IMR-90 (cell line): ENCODE measurements at regions of chr19 and their contacts with region 1.

Region 1: DNA sequence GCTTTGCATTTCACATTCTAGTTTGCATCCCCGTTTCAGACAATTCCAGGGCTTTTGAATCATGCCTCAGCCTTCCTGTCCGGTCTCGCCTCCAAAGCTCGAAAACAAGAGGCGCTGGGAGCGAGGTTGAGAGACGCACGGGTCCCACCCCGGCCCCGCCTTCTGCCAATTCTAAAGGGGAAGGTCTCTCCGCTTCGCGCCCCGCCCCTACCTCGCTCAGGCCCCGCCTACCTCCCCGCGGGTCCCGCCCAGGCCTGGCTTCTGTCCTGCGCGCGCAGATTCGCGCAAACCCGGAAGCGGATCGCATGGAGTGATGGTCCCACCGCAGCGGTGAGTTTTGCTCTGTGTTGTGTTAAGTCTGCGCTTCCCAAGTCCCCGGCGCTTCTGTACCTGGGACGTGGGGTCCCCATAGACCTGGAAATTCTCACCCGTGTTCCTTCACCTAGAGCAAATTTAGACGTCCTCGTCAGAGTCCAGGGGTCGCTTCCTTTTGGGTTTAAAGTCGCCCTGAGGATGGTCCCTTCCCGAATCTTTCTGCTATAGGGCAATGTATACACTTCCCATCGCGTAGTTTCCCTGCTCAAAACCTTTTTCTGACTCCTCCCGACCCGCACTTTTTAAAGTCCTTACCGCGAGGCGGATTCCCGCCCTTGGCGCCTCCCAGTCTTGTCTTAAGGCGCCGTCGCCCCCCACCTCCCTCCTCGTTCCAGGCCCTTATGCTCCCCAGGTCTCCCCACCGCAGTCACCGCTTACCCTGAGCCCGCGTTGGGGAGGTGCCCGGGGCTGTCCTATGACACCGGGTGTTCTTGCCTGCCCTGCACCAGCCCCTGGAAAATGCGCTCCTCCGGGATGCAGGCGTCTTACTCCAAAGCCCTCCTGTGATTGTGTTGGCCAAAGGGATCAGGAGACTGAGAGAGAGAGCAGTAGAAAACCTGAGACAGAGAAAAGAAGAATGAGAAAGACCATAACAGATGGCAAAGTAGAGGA is at the start of gene ZNF845:
- DNase-seq: peak; percentile 89
- ATAC-seq: peak; percentile 100
- H3K4me3 ChIP-seq: peak within 1 kb of the TSS; percentile 69
- H3K27ac ChIP-seq: peak within 1 kb of the TSS; percentile 62
- H3K4me1 ChIP-seq: peaks cover 1% of the 10 kb centered on the region; the same call in 1 of the 2 replicates
- H3K27me3 ChIP-seq: no peaks in the 10 kb centered on the region
- CTCF ChIP-seq: no peak
- POLR2A ChIP-seq: peak; percentile 53; the same call in 1 of the 2 replicates
- RAD21 ChIP-seq: no peak
- total RNA-seq, gene ZNF845: 9.5 and 13.1 TPM in 2 replicates

Region 2: GRCh38 chr19:53254411-53255341 is 79.1 kb before region 1 on chr19 and contains the start of gene ZNF677:
- CTCF ChIA-PET with region 1: no interaction called
- POLR2A ChIA-PET with region 1: no interaction called
- dilution Hi-C with region 1: no loop called
- in situ Hi-C with region 1: no loop called
- intact Hi-C with region 1: loop called (anchors 2 kb)
- DNase-seq: peak; percentile 76
- ATAC-seq: peak; percentile 100
- H3K4me3 ChIP-seq: peak within 1 kb of the TSS; percentile 68
- H3K27ac ChIP-seq: peak within 1 kb of the TSS; percentile 43
- H3K4me1 ChIP-seq: no peaks in the 10 kb centered on the region
- H3K27me3 ChIP-seq: no peaks in the 10 kb centered on the region
- CTCF ChIP-seq: no peak
- POLR2A ChIP-seq: peak; percentile 67; the same call in 1 of the 2 replicates
- RAD21 ChIP-seq: no peak
- total RNA-seq, gene ZNF677: 7.0 and 7.5 TPM in 2 replicates